ENCODE measurements at regions of chr12 and their contacts with region 1.

Region 1: GRCh38 chr12:38906482-38907170 is 1.2 kb upstream of the CPNE8 start:
- DNase-seq: peak; percentile 91
- ATAC-seq: peak; percentile 59
- H3K4me3 ChIP-seq: peak overlapping the region; percentile 83
- H3K27ac ChIP-seq: no peak overlapping the region
- H3K4me1 ChIP-seq: peaks cover 18% of the 10 kb centered on the region
- H3K27me3 ChIP-seq: no peaks in the 10 kb centered on the region
- CTCF ChIP-seq: peak; percentile 86

Region 2: GRCh38 chr12:38053655-38054464 is 852.8 kb before region 1 on chr12:
- CTCF ChIA-PET with region 1: no interaction called
- POLR2A ChIA-PET with region 1: no interaction called
- intact Hi-C with region 1: loop called (anchors 5 kb)
- DNase-seq: peak; percentile 97
- ATAC-seq: peak; percentile 45
- H3K4me3 ChIP-seq: peak overlapping the region; percentile 61
- H3K27ac ChIP-seq: no peak overlapping the region
- H3K4me1 ChIP-seq: peaks cover 28% of the 10 kb centered on the region
- H3K27me3 ChIP-seq: no peaks in the 10 kb centered on the region
- CTCF ChIP-seq: peak; percentile 93

Region 3: GRCh38 chr12:38332814-38333213 is 573.8 kb before region 1 on chr12:
- CTCF ChIA-PET with region 1: interaction called, 3 read pairs
- POLR2A ChIA-PET with region 1: no interaction called
- intact Hi-C with region 1: loop called (anchors 1 kb)
- DNase-seq: no peak
- ATAC-seq: no peak
- H3K4me3 ChIP-seq: no peak overlapping the region
- H3K27ac ChIP-seq: no peak overlapping the region
- H3K4me1 ChIP-seq: 0 out of 2 replicates have a peak, but pooled peaks cover 3% of the 10 kb centered on the region
- H3K27me3 ChIP-seq: no peaks in the 10 kb centered on the region
- CTCF ChIP-seq: no peak

Region 4: GRCh38 chr12:38448991-38449390 is 457.6 kb before region 1 on chr12:
- CTCF ChIA-PET with region 1: no interaction called
- POLR2A ChIA-PET with region 1: interaction called, 3 read pairs
- intact Hi-C with region 1: loop called (anchors 5 kb)
- DNase-seq: no peak
- ATAC-seq: no peak
- H3K4me3 ChIP-seq: no peak overlapping the region
- H3K27ac ChIP-seq: no peak overlapping the region
- H3K4me1 ChIP-seq: peaks cover 21% of the 10 kb centered on the region
- H3K27me3 ChIP-seq: no peaks in the 10 kb centered on the region
- CTCF ChIP-seq: no peak

Region 5: DNA sequence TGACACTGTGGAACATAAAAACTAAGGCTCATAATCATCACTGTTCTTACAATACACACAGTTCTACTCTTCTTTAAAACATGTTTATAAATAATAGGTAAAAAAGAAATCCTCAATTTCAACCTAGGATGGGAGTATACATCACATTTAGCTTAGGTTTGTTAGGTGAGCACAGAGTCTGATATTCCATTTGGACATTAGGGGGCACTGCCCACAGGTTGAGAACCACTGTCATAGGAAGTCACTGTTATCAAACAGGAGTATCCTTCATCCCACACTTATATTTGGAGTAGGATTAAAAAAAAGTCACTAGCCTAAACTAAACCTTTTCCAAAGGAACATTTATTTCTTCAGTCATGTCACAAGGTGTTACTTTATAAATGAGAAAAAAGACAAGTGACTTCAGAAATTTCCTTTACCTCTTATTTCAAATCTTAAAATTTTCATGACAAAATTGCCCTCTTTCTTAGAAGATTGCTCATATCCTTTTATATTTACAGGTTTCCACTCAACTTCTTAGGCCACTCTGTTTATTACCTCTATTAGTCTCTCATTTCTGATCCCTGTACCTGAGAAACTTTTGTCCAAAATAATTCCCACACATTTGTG is 241.9 kb before region 1 on chr12:
- CTCF ChIA-PET with region 1: interaction called, 19 read pairs
- POLR2A ChIA-PET with region 1: no interaction called
- intact Hi-C with region 1: loop called (anchors 2 kb)
- DNase-seq: peak; percentile 65
- ATAC-seq: peak; percentile 87
- H3K4me3 ChIP-seq: no peak overlapping the region
- H3K27ac ChIP-seq: no peak overlapping the region
- H3K4me1 ChIP-seq: no peaks in the 10 kb centered on the region
- H3K27me3 ChIP-seq: no peaks in the 10 kb centered on the region
- CTCF ChIP-seq: peak; percentile 87

Region 6: DNA sequence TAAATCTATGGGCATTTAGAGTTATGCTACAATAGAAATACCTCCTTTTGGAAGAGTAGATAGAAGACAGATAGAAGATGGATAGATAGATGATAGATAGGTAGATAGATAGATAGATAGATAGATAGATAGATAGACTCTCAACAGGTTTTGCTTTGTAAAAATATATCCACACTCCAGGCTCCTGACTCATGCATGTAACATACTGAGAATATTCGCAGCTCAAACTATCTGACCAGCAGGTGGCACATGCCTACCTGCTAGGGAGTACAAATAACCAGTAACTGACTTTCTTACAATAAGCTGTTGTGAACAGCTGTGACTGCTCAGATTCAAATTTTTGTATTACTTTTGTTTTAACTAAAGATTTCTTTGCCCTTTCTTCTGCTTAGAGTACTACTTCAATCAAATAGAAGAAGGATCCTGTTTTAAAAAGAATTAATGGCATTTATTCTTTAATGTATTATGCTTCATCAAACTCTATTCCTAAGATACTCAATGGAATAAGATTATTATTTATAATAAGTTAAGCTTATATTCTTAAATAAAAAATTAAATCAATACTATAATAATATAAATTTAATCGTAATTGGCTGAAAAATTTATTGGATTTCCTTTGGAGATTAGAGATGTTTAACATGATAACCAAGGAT is 14.5 kb after region 1 on chr12:
- CTCF ChIA-PET with region 1: interaction called, 15 read pairs
- POLR2A ChIA-PET with region 1: interaction called, 6 read pairs
- intact Hi-C with region 1: no loop called
- DNase-seq: peak; percentile 92
- ATAC-seq: peak; percentile 96
- H3K4me3 ChIP-seq: no peak overlapping the region
- H3K27ac ChIP-seq: no peak overlapping the region
- H3K4me1 ChIP-seq: peaks cover 11% of the 10 kb centered on the region
- H3K27me3 ChIP-seq: no peaks in the 10 kb centered on the region
- CTCF ChIP-seq: peak; percentile 85